ENCODE measurements at regions of chr3 and their contacts with region 1.

Region 1: GRCh38 chr3:72818092-72818773 is 30.0 kb downstream of the SHQ1 start:
- DNase-seq: no peak
- H3K4me3 ChIP-seq: no peak overlapping the region
- H3K27ac ChIP-seq: peak overlapping the region; percentile 55
- H3K27me3 ChIP-seq: no peaks in the 10 kb centered on the region
- CTCF ChIP-seq: peak; percentile 73

Region 2: DNA sequence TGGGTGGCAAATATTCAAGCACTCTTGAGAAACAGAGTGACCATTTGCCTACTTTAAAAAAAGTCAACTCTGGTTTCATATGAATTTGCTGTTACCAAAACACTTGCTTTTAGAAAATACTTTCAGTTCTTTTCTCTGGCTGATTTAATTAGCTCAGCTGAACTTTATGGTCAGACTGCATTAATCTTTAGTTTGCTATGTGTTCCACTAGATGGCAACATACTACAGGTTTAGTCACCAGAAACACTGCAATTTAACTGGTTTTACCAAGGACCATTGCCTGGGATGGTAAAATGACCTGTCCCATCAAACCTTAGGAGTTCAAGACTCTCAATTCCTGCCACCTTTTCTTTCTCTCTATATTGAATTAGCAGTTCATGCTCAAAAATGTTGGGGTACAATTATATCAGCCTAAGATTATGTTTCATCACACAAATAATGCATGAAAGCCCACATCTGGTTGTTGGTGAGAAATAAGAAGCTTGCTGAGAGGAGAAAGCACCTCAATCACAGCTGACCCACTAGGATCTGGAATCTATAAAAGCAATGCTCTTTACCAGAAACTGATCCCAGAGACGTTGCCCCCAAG is 1107.2 kb before region 1 on chr3:
- CTCF ChIA-PET with region 1: interaction called, 32 read pairs
- POLR2A ChIA-PET with region 1: no interaction called
- DNase-seq: no peak
- H3K4me3 ChIP-seq: no peak overlapping the region
- H3K27ac ChIP-seq: no peak overlapping the region
- H3K27me3 ChIP-seq: peaks cover 13% of the 10 kb centered on the region
- CTCF ChIP-seq: peak; percentile 65

Region 3: GRCh38 chr3:71875461-71875947 is 942.7 kb before region 1 on chr3:
- CTCF ChIA-PET with region 1: interaction called, 208 read pairs
- POLR2A ChIA-PET with region 1: no interaction called
- DNase-seq: peak; percentile 15
- H3K4me3 ChIP-seq: no peak overlapping the region
- H3K27ac ChIP-seq: no peak overlapping the region
- H3K27me3 ChIP-seq: peaks cover 10% of the 10 kb centered on the region
- CTCF ChIP-seq: peak; percentile 93

Region 4: DNA sequence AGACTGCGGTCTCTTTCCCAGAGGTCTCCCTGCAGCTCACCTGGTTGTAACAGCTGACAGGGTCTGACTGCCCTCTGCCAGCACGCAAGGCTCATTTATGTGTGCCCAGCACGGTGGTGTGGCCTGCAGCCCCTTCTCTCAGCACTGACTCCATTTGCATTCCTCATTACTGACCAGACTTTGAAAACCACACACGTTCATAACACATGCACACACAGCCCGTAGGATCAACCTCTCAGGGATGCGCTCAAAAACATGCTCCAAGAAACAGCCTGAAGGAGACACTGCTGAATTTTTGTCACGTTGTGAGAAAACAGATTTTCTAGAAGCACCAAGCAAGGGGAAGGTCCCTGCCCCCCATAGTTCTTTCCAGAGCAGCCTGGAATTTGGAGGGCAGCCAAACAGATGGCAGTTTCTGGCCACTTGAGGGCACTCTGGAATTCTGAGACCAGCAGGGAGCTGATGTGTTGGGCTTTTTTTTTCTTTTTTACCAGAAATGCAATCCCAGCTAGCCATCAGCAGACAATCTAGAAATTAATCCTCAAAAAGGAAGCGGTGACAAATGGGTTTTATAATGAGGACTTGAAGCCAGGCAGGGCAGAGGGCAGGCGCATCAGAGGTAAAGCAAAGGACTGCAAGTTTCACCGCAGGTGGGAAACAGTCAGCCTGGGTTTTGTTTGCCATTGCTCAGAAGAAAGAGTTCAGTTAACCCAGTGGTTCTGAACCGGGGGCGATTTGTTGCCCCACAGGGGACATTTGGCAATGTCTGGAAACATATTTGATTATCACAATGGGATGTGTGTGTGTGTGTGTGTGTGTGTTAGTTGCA is 862.8 kb before region 1 on chr3:
- CTCF ChIA-PET with region 1: interaction called, 45 read pairs
- POLR2A ChIA-PET with region 1: no interaction called
- DNase-seq: peak; percentile 33
- H3K4me3 ChIP-seq: no peak overlapping the region
- H3K27ac ChIP-seq: no peak overlapping the region
- H3K27me3 ChIP-seq: peaks cover 3% of the 10 kb centered on the region
- CTCF ChIP-seq: peak; percentile 75

Region 5: GRCh38 chr3:72745146-72745999 is 72.9 kb before region 1 on chr3:
- CTCF ChIA-PET with region 1: no interaction called
- POLR2A ChIA-PET with region 1: no interaction called
- DNase-seq: no peak
- H3K4me3 ChIP-seq: no peak overlapping the region
- H3K27ac ChIP-seq: no peak overlapping the region
- H3K27me3 ChIP-seq: no peaks in the 10 kb centered on the region
- CTCF ChIP-seq: no peak

Region 6: DNA sequence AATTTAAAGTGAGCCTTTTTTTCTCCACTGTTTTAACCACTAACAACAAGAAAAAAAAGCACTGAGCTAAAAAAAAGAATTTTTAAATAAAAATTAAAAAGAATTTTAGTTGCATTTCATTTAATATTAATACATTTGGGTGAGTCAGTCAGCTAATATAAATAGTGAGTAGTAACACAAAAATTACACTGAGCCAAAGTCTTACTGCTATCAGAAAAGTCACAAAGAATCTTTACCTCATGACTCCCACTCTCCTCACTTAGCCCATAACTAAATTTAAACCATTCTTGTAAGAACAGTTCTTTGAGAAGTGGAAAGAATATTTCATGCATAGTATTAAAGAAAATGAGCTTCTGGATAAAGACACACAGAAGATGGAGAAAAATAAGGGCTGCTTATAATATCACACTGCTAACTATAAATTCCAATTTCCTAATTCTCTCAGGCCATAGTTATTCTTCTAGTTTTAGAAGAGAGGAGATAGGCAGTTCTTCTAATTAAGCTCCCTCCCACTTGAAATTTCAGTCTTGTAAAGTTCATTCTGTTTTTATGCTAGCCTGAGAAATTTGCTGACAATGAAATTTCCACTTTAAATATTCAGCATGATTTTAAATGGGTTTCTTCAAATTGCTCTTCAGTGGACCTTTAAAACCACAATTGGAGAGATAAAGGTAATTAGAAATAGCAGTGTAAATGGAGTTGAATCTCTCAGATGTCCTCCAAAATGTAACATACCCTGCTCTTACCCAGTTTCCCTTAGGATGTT is 12.4 kb after region 1 on chr3:
- CTCF ChIA-PET with region 1: interaction called, 14 read pairs
- POLR2A ChIA-PET with region 1: no interaction called
- DNase-seq: no peak
- H3K4me3 ChIP-seq: no peak overlapping the region
- H3K27ac ChIP-seq: no peak overlapping the region
- H3K27me3 ChIP-seq: no peaks in the 10 kb centered on the region
- CTCF ChIP-seq: no peak

Region 7: DNA sequence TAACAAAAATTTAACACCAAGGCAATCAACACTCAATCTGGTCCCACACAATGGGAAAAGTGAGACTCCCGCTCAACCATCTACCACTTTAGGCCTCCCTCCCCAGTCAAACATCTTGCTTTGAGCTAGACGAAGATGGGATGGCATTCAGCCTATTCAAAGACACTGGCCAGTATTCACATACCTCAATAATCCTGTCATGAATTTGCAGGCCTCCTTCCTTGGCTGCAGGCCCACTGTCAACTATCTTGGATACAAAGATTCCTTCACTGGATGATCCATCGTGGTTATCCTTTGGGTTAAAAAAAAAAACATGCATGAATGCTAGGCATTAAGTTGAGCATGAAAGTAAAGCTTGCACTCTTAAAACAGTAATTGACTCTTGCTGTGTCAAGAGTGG is 783.9 kb after region 1 on chr3:
- CTCF ChIA-PET with region 1: no interaction called
- POLR2A ChIA-PET with region 1: no interaction called
- DNase-seq: no peak
- H3K4me3 ChIP-seq: no peak overlapping the region
- H3K27ac ChIP-seq: no peak overlapping the region
- H3K27me3 ChIP-seq: no peaks in the 10 kb centered on the region
- CTCF ChIP-seq: no peak

Measured in AG04450 (cell line).